ENCODE measurements at regions of chr12 and their contacts with region 1.

Region 1: GRCh38 chr12:65232476-65233077 is 45.9 kb upstream of the MSRB3 start:
- DNase-seq: peak; percentile 62
- H3K4me3 ChIP-seq: no peak overlapping the region
- H3K27ac ChIP-seq: no peak overlapping the region
- H3K4me1 ChIP-seq: peaks cover 3% of the 10 kb centered on the region
- H3K27me3 ChIP-seq: no peaks in the 10 kb centered on the region
- CTCF ChIP-seq: peak in 1 of 2 donors; percentile 12
- POLR2A ChIP-seq: no peak

Region 2: DNA sequence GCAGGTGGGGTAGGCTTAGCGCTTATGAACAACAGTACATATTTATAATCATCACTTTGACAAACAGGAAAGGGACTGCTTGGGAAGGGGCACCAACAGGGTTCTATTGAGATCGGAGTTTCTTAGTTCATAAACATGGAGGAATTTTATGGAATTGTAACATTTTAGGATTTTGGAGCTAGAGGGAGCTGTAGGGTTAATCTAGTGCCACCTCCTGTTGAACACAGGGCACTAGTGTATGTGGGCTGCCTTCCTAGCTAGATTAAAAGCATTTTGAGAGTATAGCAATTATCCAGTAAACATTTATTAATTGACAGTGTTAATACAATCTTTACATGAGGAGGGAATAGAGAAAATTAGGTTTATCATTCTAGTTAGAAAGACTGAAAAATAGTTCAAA is 431.2 kb before region 1 on chr12:
- CTCF ChIA-PET with region 1: interaction called, 24 read pairs
- POLR2A ChIA-PET with region 1: no interaction called
- dilution Hi-C with region 1: no loop called
- intact Hi-C with region 1: loop called (anchors 5 kb)
- DNase-seq: peak; percentile 33
- H3K4me3 ChIP-seq: no peak overlapping the region
- H3K27ac ChIP-seq: no peak overlapping the region
- H3K4me1 ChIP-seq: no peaks in the 10 kb centered on the region
- H3K27me3 ChIP-seq: no peaks in the 10 kb centered on the region
- CTCF ChIP-seq: peak; percentile 17 to 33
- POLR2A ChIP-seq: no peak

Region 3: GRCh38 chr12:64923536-64923935 is 309.0 kb before region 1 on chr12:
- CTCF ChIA-PET with region 1: no interaction called
- POLR2A ChIA-PET with region 1: no interaction called
- dilution Hi-C with region 1: no loop called
- intact Hi-C with region 1: no loop called
- DNase-seq: no peak
- H3K4me3 ChIP-seq: no peak overlapping the region
- H3K27ac ChIP-seq: no peak overlapping the region
- H3K4me1 ChIP-seq: no peaks in the 10 kb centered on the region
- H3K27me3 ChIP-seq: peaks cover 7% of the 10 kb centered on the region in 2 experiments
- CTCF ChIP-seq: no peak
- POLR2A ChIP-seq: no peak

Region 4: GRCh38 chr12:65106948-65107347 is 125.6 kb before region 1 on chr12:
- CTCF ChIA-PET with region 1: interaction called, 18 read pairs
- POLR2A ChIA-PET with region 1: no interaction called
- dilution Hi-C with region 1: no loop called
- intact Hi-C with region 1: no loop called
- DNase-seq: peak; percentile 9
- H3K4me3 ChIP-seq: no peak overlapping the region
- H3K27ac ChIP-seq: no peak overlapping the region
- H3K4me1 ChIP-seq: no peaks in the 10 kb centered on the region
- H3K27me3 ChIP-seq: peaks cover 1 to 4% of the 10 kb centered on the region in 2 experiments
- CTCF ChIP-seq: peak in 1 of 2 donors; percentile 24
- POLR2A ChIP-seq: no peak

Region 5: GRCh38 chr12:65133876-65134275 is 98.7 kb before region 1 on chr12:
- CTCF ChIA-PET with region 1: interaction called, 11 read pairs
- POLR2A ChIA-PET with region 1: no interaction called
- dilution Hi-C with region 1: no loop called
- intact Hi-C with region 1: no loop called
- DNase-seq: no peak
- H3K4me3 ChIP-seq: no peak overlapping the region
- H3K27ac ChIP-seq: no peak overlapping the region
- H3K4me1 ChIP-seq: no peaks in the 10 kb centered on the region
- H3K27me3 ChIP-seq: peaks cover 4 to 11% of the 10 kb centered on the region in 2 experiments
- CTCF ChIP-seq: no peak
- POLR2A ChIP-seq: no peak

Region 6: GRCh38 chr12:65188179-65188701 is 44.3 kb before region 1 on chr12:
- CTCF ChIA-PET with region 1: interaction called, 17 read pairs
- POLR2A ChIA-PET with region 1: no interaction called
- dilution Hi-C with region 1: no loop called
- intact Hi-C with region 1: no loop called
- DNase-seq: no peak
- H3K4me3 ChIP-seq: no peak overlapping the region
- H3K27ac ChIP-seq: no peak overlapping the region
- H3K4me1 ChIP-seq: peaks cover 4% of the 10 kb centered on the region
- H3K27me3 ChIP-seq: no peaks in the 10 kb centered on the region
- CTCF ChIP-seq: no peak
- POLR2A ChIP-seq: no peak

Region 7: GRCh38 chr12:65209655-65210043 is 22.9 kb before region 1 on chr12:
- CTCF ChIA-PET with region 1: interaction called, 29 read pairs
- POLR2A ChIA-PET with region 1: no interaction called
- dilution Hi-C with region 1: no loop called
- intact Hi-C with region 1: no loop called
- DNase-seq: peak; percentile 82
- H3K4me3 ChIP-seq: peak overlapping the region in 1 of 3 experiments; percentile 16
- H3K27ac ChIP-seq: peak overlapping the region; percentile 3
- H3K4me1 ChIP-seq: peaks cover 17% of the 10 kb centered on the region
- H3K27me3 ChIP-seq: no peaks in the 10 kb centered on the region
- CTCF ChIP-seq: no peak
- POLR2A ChIP-seq: no peak

Region 8: GRCh38 chr12:65300680-65301349 is 68.2 kb after region 1 on chr12:
- CTCF ChIA-PET with region 1: interaction called, 10 read pairs
- POLR2A ChIA-PET with region 1: no interaction called
- dilution Hi-C with region 1: no loop called
- intact Hi-C with region 1: no loop called
- DNase-seq: no peak
- H3K4me3 ChIP-seq: no peak overlapping the region
- H3K27ac ChIP-seq: no peak overlapping the region
- H3K4me1 ChIP-seq: peaks cover 7% of the 10 kb centered on the region
- H3K27me3 ChIP-seq: no peaks in the 10 kb centered on the region
- CTCF ChIP-seq: peak; percentile 28 to 42
- POLR2A ChIP-seq: no peak

Region 9: GRCh38 chr12:65392491-65392890 is 159.9 kb after region 1 on chr12:
- CTCF ChIA-PET with region 1: no interaction called
- POLR2A ChIA-PET with region 1: no interaction called
- dilution Hi-C with region 1: no loop called
- intact Hi-C with region 1: no loop called
- DNase-seq: no peak
- H3K4me3 ChIP-seq: no peak overlapping the region
- H3K27ac ChIP-seq: no peak overlapping the region
- H3K4me1 ChIP-seq: no peaks in the 10 kb centered on the region
- H3K27me3 ChIP-seq: no peaks in the 10 kb centered on the region
- CTCF ChIP-seq: no peak
- POLR2A ChIP-seq: no peak

Region 10: GRCh38 chr12:65464930-65465329 is 232.4 kb after region 1 on chr12:
- CTCF ChIA-PET with region 1: no interaction called
- POLR2A ChIA-PET with region 1: no interaction called
- dilution Hi-C with region 1: no loop called
- intact Hi-C with region 1: no loop called
- DNase-seq: peak; percentile 18
- H3K4me3 ChIP-seq: no peak overlapping the region
- H3K27ac ChIP-seq: no peak overlapping the region
- H3K4me1 ChIP-seq: no peaks in the 10 kb centered on the region
- H3K27me3 ChIP-seq: no peaks in the 10 kb centered on the region
- CTCF ChIP-seq: no peak
- POLR2A ChIP-seq: no peak